B cell (primary cell): ENCODE measurements at regions of chr4 and their contacts with region 1.

Region 1: DNA sequence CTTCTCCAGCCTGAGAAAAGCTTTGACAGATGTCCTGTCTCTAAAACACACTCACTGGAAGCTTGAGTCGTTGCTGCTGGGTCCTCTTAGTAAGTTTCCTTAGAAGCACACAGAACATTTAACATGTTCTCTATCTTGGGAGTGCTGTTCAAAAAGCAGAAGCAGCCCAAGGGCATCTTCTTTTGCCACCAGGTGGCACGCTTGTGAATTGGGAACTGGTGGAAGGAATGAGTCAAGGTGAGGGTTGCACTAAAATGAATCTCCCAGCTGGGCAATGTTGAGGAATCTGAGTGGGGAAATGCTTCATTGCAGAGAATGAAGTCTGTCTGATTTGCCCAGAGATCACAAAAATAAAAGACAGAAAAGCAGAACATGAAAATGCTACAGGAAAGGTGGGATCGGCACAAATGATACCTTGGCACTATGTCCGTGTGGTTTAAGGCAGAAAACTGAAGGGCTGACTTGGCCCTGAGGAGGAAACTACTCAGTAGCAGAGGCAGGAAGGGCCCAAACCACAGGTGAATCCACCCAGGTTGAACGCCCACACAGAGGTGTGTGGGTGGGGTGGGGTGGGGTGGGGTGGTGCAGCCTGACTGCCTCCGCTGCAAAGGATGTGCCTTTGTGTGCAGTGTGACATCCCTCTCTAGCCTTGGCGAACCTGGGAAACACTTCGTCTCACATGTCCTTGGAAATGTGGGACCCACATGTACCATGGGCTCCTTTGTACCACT is 26.0 kb downstream of the KIT start:
- DNase-seq: peak; percentile 71
- ATAC-seq: no peak
- H3K4me3 ChIP-seq: peak overlapping the region in 1 of 5 experiments; percentile 17
- H3K4me3 Mint-ChIP-seq: peak overlapping the region; percentile 68
- H3K27ac ChIP-seq: no peak overlapping the region
- H3K27ac Mint-ChIP-seq: no peak overlapping the region
- H3K4me1 ChIP-seq: peaks cover 41 to 44% of the 10 kb centered on the region in 2 donors
- H3K4me1 Mint-ChIP-seq: peaks cover 44% of the 10 kb centered on the region
- H3K27me3 ChIP-seq: no peaks in the 10 kb centered on the region
- H3K27me3 Mint-ChIP-seq: no peaks in the 10 kb centered on the region
- CTCF ChIP-seq: peak; percentile 66

Region 2: GRCh38 chr4:53816561-53816960 is 867.2 kb before region 1 on chr4:
- CTCF ChIA-PET with region 1: no interaction called
- POLR2A ChIA-PET with region 1: no interaction called
- intact Hi-C with region 1: no loop called
- DNase-seq: no peak
- ATAC-seq: no peak
- H3K4me3 ChIP-seq: no peak overlapping the region
- H3K4me3 Mint-ChIP-seq: no peak overlapping the region
- H3K27ac ChIP-seq: no peak overlapping the region
- H3K27ac Mint-ChIP-seq: no peak overlapping the region
- H3K4me1 ChIP-seq: no peaks in the 10 kb centered on the region
- H3K4me1 Mint-ChIP-seq: no peaks in the 10 kb centered on the region
- H3K27me3 ChIP-seq: peaks cover 0 to 5% (median 0%) of the 10 kb centered on the region in 4 experiments
- H3K27me3 Mint-ChIP-seq: no peaks in the 10 kb centered on the region
- CTCF ChIP-seq: no peak

Region 3: DNA sequence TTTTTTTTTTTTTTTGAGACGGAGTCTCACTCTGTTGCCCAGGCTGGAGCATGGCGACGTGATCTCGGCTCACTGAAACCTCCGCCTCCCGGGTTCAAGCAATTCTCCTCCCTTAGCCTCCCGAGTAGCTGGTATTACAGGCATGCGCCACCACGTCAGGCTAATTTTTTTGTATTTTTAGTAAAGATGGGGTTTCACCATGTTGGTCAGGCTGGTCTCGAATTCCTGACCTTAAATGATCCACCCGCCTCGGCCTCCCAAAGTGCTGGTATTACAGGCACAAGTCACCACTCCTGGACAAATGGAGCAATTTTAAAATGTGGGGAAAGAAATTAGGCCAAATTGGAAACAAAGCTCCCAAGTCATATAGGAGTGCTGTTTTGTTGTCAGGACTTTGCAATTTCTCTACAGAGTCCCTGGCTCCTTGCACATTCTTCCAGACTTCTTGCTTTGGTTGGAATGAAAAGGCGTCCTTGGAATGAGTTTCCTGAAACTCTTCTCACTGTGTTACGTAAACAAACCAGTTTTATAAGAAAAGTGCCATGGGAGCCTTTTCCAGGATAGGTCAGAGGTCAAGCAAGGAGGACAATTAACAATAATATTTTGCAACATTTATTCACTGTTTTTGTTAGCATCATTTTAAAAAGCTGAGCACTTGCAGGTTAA is 58.5 kb before region 1 on chr4:
- CTCF ChIA-PET with region 1: no interaction called
- POLR2A ChIA-PET with region 1: no interaction called
- intact Hi-C with region 1: no loop called
- DNase-seq: no peak
- ATAC-seq: no peak
- H3K4me3 ChIP-seq: no peak overlapping the region
- H3K4me3 Mint-ChIP-seq: no peak overlapping the region
- H3K27ac ChIP-seq: no peak overlapping the region
- H3K27ac Mint-ChIP-seq: no peak overlapping the region
- H3K4me1 ChIP-seq: no peaks in the 10 kb centered on the region
- H3K4me1 Mint-ChIP-seq: no peaks in the 10 kb centered on the region
- H3K27me3 ChIP-seq: peaks cover 0 to 8% (median 0%) of the 10 kb centered on the region in 4 experiments
- H3K27me3 Mint-ChIP-seq: peaks cover 7% of the 10 kb centered on the region
- CTCF ChIP-seq: no peak

Region 4: DNA sequence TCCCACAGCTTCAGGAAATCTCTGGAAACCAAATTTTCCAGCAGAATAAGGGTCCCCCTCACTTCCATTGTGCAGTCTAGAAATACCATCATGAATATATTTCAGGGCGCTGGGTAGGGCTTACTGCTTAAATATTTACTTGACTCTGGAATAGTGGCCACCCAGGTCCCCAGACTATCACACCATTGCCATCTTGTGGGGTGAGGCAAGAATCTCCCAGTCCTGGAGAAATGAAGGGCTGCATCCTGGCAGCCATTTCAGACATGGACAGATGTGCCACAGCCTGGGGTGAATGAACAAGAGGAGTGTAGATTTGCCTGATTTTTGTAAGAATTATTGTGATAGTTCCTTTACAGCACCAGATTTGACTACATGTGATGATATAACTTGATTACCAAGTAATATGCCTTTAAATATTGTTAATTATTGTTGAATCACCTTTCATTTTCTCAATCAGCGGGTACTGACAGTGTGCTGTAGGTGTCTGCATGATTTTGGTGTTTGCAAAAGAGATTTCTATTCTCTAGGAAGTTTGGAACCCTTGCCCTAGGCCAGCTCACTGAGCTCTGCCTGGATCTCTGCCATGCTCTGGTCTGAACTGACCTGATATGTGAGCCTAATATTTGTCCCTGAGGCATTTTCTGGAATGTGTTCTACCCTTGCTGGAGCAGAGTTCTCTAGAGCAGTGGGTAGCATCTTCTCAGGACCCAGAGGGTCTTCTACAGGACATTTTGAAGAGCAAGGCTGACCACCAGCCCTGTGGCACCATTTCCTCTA is 157.4 kb after region 1 on chr4:
- CTCF ChIA-PET with region 1: interaction called, 3 read pairs
- POLR2A ChIA-PET with region 1: no interaction called
- intact Hi-C with region 1: loop called (anchors 1 kb)
- DNase-seq: no peak
- ATAC-seq: no peak
- H3K4me3 ChIP-seq: no peak overlapping the region
- H3K4me3 Mint-ChIP-seq: no peak overlapping the region
- H3K27ac ChIP-seq: no peak overlapping the region
- H3K27ac Mint-ChIP-seq: no peak overlapping the region
- H3K4me1 ChIP-seq: no peaks in the 10 kb centered on the region
- H3K4me1 Mint-ChIP-seq: no peaks in the 10 kb centered on the region
- H3K27me3 ChIP-seq: no peaks in the 10 kb centered on the region
- H3K27me3 Mint-ChIP-seq: no peaks in the 10 kb centered on the region
- CTCF ChIP-seq: no peak

Region 5: DNA sequence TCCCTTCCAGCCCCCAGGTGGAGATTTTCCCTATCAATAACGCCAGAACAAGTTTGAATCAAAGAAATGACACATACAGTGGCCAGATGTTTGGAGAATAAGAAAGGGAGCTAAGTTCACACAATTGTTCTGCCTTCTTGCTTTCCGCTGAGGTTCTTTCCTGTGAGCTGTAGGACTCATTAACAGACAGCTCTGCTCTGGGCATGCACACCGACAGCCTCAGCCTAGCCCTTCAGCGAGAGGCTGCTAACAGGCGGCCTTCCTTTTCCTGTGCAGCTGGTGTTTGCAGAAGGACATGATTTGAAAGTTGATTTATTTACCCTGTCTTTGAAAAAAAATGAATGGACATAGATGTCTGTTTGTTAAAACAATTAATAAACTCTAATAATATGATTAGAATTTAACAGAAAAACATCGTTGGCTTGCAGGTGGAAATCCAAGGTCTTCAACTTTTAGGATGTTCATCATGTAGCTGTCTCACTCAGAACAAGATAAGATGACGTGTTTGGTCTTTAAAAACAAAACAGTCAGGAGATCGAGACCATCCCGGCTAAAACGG is 258.3 kb after region 1 on chr4:
- CTCF ChIA-PET with region 1: interaction called, 5 read pairs
- POLR2A ChIA-PET with region 1: no interaction called
- intact Hi-C with region 1: loop called (anchors 2 kb)
- DNase-seq: peak; percentile 48
- ATAC-seq: peak; percentile 69
- H3K4me3 ChIP-seq: peak overlapping the region in 3 of 5 experiments; percentile 10 to 43 (median 39)
- H3K4me3 Mint-ChIP-seq: peak overlapping the region; percentile 75
- H3K27ac ChIP-seq: peak overlapping the region; percentile 4 to 87
- H3K27ac Mint-ChIP-seq: peak overlapping the region; percentile 76
- H3K4me1 ChIP-seq: peaks cover 25 to 30% of the 10 kb centered on the region in 2 donors
- H3K4me1 Mint-ChIP-seq: peaks cover 33% of the 10 kb centered on the region
- H3K27me3 ChIP-seq: peaks cover 0 to under 1% (median 0%) of the 10 kb centered on the region in 4 experiments
- H3K27me3 Mint-ChIP-seq: peaks cover 5% of the 10 kb centered on the region
- CTCF ChIP-seq: no peak

Region 6: DNA sequence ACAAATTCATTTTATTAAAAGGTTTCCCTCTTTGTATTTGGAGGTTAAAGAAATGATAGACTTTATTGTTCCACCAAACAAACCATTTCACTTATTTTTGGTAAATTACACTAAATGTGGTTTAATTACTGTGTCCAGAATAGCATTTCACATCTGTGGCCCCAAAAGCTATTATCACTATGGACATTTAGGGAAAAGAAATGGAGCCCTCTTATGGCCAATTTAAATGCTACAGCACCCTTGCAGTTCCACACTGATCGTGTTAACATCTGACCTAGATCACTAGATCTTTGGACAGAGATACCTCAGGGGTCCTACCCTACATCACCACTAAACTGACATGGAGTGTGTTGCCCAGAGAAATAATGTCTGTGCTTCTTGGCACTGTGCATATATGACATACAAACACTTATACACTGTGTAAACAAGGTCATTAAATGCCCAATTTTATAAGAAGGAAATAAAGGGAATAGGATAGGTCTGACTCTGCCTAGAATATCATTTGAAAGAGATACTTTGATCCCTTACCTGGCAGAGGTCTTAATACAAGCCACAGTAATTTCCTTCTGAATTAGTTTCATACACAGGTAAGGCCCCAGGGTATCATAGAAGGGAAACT is 277.7 kb after region 1 on chr4:
- CTCF ChIA-PET with region 1: interaction called, 15 read pairs
- POLR2A ChIA-PET with region 1: no interaction called
- intact Hi-C with region 1: no loop called
- DNase-seq: peak; percentile 41
- ATAC-seq: no peak
- H3K4me3 ChIP-seq: no peak overlapping the region
- H3K4me3 Mint-ChIP-seq: no peak overlapping the region
- H3K27ac ChIP-seq: no peak overlapping the region
- H3K27ac Mint-ChIP-seq: no peak overlapping the region
- H3K4me1 ChIP-seq: no peaks in the 10 kb centered on the region
- H3K4me1 Mint-ChIP-seq: no peaks in the 10 kb centered on the region
- H3K27me3 ChIP-seq: peaks cover 0 to 3% (median 0%) of the 10 kb centered on the region in 4 experiments
- H3K27me3 Mint-ChIP-seq: peaks cover 20% of the 10 kb centered on the region
- CTCF ChIP-seq: peak; percentile 45